HEK293 (cell line): ENCODE measurements at regions of chr9 and their contacts with region 1.

Region 1: GRCh38 chr9:6907772-6908381 is 150.1 kb downstream of the KDM4C start:
- H3K4me3 ChIP-seq: no peak overlapping the region
- H3K27ac ChIP-seq: no peak overlapping the region
- H3K4me1 ChIP-seq: no peaks in the 10 kb centered on the region
- CTCF ChIP-seq: 0 out of 2 replicates have a peak, but pooled peaks have one; percentile 18

Region 2: DNA sequence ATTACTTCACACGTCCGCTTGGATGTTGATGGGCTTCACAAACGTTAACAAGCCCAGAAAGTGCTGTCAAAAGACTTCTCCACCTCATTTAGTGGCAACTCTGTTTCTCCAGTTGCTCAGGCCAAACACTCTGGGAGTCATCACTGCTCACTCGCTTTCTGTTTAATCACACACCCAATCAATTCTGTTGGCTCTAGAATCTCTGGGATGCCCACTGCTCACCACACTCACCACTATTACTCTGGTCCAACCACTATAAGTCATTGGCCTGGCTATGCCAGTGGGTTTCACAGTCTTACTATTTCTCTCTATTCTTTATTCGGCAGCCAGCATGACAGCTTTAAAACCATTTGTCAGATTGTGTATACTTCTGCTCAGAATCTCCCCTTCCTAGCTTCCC is 13.4 kb after region 1 on chr9:
- CTCF ChIA-PET with region 1: interaction called, 10 read pairs
- POLR2A ChIA-PET with region 1: interaction called, 3 read pairs
- H3K4me3 ChIP-seq: no peak overlapping the region
- H3K27ac ChIP-seq: no peak overlapping the region
- H3K4me1 ChIP-seq: no peaks in the 10 kb centered on the region
- CTCF ChIP-seq: no peak